ENCODE measurements at regions of chr14 and their contacts with region 1.

Region 1: DNA sequence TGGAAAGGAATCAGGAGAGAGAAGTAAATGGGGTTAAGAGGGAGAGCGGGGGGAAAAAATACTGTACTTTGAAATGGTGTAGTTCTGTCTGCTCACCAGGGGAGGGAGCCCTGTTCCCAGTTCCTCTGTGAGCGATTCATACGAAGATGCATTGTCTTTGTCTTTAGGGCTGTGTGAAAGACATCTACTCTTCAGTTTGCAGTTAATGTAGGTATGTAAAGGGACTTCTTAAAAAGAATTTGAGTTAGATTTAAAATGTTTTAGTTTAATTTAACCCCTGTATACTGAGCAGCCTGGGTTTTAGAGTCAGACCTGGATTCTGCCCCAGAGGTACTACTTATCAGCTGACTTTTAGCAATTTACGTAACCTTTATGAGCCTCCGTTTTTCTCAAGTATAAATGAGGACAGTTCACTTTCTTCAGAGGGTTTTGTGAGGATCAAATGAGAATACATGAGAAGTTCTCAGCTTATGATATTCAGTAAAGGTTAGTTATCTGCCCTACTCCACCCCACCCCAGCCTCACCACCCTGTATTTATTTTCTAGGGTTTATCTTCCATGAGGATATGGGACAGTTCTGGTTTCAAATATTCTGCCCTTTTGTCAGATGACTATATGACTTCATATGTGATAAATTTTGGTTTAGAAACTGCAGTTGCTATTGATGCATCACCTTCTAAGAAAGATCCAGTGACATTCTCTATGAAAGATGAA is 82.5 kb upstream of the EVL start:
- DNase-seq: peak; percentile 65 to 74
- ATAC-seq: peak; percentile 92 to 97
- H3K4me3 ChIP-seq: no peak overlapping the region
- H3K27ac ChIP-seq: peak overlapping the region; percentile 4 to 46; a peak in 2 of 6 replicates
- H3K4me1 ChIP-seq: peaks cover 23% of the 10 kb centered on the region
- CTCF ChIP-seq: peak; percentile 97
- EP300 ChIP-seq: no peak
- POLR2A ChIP-seq: no peak
- RAD21 ChIP-seq: peak; percentile 94 to 96

Region 2: DNA sequence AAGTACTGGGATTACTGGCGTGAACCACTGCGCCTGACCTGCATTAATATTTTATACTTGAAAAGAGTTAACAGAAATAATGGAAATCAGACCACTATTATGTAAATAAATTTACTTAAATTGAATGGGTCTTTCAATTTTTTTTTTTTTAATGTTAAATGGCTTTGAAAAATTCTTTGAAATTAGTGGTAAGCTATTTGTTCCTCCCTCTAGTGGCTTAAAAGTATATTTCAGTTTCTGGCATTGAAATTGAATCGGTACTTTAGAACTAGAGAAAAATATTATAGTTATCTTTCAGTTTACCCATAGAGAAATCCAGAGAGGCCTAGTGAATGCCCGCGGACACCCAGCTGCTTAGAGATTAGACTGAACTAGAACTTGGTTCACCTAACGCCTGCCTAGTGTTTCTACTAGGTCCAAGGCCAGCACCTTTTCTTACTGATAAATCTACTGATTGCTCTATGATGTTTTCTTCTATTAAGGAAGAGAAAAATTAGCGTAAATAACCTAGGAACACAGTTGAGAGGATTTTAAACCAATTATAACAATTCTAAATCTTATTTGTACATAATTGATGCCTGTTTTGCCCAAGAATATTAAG is 83.0 kb before region 1 on chr14:
- CTCF ChIA-PET with region 1: no interaction called
- POLR2A ChIA-PET with region 1: no interaction called
- DNase-seq: peak in 1 of 2 experiments; percentile 15
- ATAC-seq: peak in 1 of 2 experiments; percentile 49; a peak in 2 of 6 replicates
- H3K4me3 ChIP-seq: no peak overlapping the region
- H3K27ac ChIP-seq: no peak overlapping the region
- H3K4me1 ChIP-seq: no peaks in the 10 kb centered on the region
- CTCF ChIP-seq: peak; percentile 50
- EP300 ChIP-seq: no peak
- POLR2A ChIP-seq: no peak
- RAD21 ChIP-seq: peak; percentile 23 to 28; a peak in 2 of 5 replicates

Region 3: GRCh38 chr14:99946652-99947489 is 35.8 kb before region 1 on chr14:
- CTCF ChIA-PET with region 1: interaction called, 17 read pairs
- POLR2A ChIA-PET with region 1: no interaction called
- DNase-seq: peak in 1 of 2 experiments; percentile 76
- ATAC-seq: peak; percentile 75 to 89
- H3K4me3 ChIP-seq: no peak overlapping the region
- H3K27ac ChIP-seq: no peak overlapping the region
- H3K4me1 ChIP-seq: peaks cover 8% of the 10 kb centered on the region; the same call in 1 of the 3 replicates
- CTCF ChIP-seq: peak; percentile 81
- EP300 ChIP-seq: no peak
- POLR2A ChIP-seq: no peak
- RAD21 ChIP-seq: peak; percentile 47 to 54; a peak in 4 of 5 replicates

Region 4: DNA sequence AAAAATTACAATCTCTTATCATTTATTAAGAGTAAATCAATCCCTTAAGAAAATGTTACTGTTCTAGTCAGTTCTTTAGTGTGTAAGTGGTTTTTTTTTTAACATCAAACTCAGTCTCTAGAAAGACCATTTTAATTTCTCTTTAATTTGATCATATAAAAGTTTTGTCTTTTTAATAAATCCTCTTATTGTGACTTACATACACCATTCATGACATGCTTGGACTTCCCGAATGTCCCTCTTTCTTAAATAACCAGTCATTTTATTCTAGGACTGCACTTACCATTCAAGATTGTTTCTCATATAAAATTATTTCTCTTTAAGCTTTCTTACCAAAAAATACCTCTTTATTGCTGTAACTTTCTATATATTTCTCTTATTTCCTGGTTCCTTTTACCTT is 21.7 kb after region 1 on chr14:
- CTCF ChIA-PET with region 1: interaction called, 10 read pairs
- POLR2A ChIA-PET with region 1: no interaction called
- DNase-seq: peak in 1 of 2 experiments; percentile 51
- ATAC-seq: no peak
- H3K4me3 ChIP-seq: no peak overlapping the region
- H3K27ac ChIP-seq: no peak overlapping the region
- H3K4me1 ChIP-seq: no peaks in the 10 kb centered on the region
- CTCF ChIP-seq: no peak
- EP300 ChIP-seq: no peak
- POLR2A ChIP-seq: no peak
- RAD21 ChIP-seq: no peak

Region 5: GRCh38 chr14:100031536-100032281 is 49.0 kb after region 1 on chr14:
- CTCF ChIA-PET with region 1: interaction called, 73 read pairs
- POLR2A ChIA-PET with region 1: interaction called, 3 read pairs
- DNase-seq: peak; percentile 91 to 96
- ATAC-seq: peak; percentile 91 to 93
- H3K4me3 ChIP-seq: peak overlapping the region; percentile 41
- H3K27ac ChIP-seq: peak overlapping the region; percentile 95 to 96
- H3K4me1 ChIP-seq: peaks cover 61% of the 10 kb centered on the region
- CTCF ChIP-seq: peak; percentile 57
- EP300 ChIP-seq: peak; percentile 35 to 78; a peak in 3 of 5 replicates
- POLR2A ChIP-seq: no peak
- RAD21 ChIP-seq: peak in 1 of 2 experiments; percentile 18; a peak in 3 of 5 replicates

Region 6: GRCh38 chr14:100078991-100079725 is 96.5 kb after region 1 on chr14:
- CTCF ChIA-PET with region 1: interaction called, 12 read pairs
- POLR2A ChIA-PET with region 1: no interaction called
- DNase-seq: no peak
- ATAC-seq: peak; percentile 38 to 63; a peak in 3 of 6 replicates
- H3K4me3 ChIP-seq: no peak overlapping the region
- H3K27ac ChIP-seq: 0 out of 6 replicates have a peak overlapping the region, but pooled peaks of 1 of the 2 experiments have one; percentile 15
- H3K4me1 ChIP-seq: no peaks in the 10 kb centered on the region
- CTCF ChIP-seq: no peak
- EP300 ChIP-seq: no peak
- POLR2A ChIP-seq: no peak
- RAD21 ChIP-seq: 0 out of 5 replicates have a peak, but pooled peaks have one; percentile 3 to 11

Region 7: DNA sequence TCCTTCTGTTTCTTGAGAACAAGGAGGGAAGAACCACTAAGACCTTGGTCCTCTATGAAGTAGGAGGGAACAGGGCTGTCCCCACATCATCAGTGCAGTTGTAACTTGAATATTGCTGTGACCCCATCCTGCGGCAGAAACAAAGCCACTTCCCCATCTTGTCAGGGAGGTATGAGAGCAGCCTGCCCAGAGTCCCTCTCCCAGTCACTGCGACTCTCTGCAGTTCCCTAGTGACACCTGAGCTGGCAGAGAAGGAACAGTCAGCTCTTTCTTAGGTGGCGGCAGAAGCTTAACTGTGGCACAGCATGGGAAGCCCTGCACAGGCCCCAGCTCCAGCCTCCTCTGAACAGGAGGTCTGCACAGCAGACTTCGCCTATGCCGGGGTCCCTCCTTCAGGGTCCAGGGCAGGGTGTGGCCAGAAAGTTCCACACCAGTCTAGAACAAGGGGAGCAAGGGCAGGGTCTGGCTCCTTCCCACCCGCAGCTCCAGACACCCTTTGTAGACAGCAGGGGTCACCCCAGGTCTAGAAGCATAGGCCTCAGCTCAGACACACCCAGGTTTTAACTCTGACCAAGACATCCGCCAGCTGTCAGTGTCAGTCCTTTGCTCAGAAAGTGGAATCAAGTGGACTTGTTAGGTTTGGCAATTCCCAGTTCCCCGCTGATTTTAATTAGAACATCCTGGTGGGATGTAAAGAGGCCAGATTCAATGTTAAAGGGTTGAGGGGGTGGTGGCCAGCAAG is 140.0 kb after region 1 on chr14:
- CTCF ChIA-PET with region 1: interaction called, 31 read pairs
- POLR2A ChIA-PET with region 1: no interaction called
- DNase-seq: no peak
- ATAC-seq: peak; percentile 35 to 50; a peak in 3 of 6 replicates
- H3K4me3 ChIP-seq: no peak overlapping the region
- H3K27ac ChIP-seq: no peak overlapping the region
- H3K4me1 ChIP-seq: no peaks in the 10 kb centered on the region
- CTCF ChIP-seq: no peak
- EP300 ChIP-seq: no peak
- POLR2A ChIP-seq: no peak
- RAD21 ChIP-seq: 0 out of 5 replicates have a peak, but pooled peaks of 1 of the 2 experiments have one; percentile 31

Measured in A549 (cell line).